ENCODE measurements at regions of chr7 and their contacts with region 1.

Region 1: GRCh38 chr7:112449902-112450806 is at the start of gene IFRD1:
- DNase-seq: peak; percentile 98
- H3K4me3 ChIP-seq: peak within 1 kb of the TSS; percentile 99 to 100
- H3K27ac ChIP-seq: peak within 1 kb of the TSS; percentile 95 to 99
- H3K4me1 ChIP-seq: peaks cover 14 to 24% of the 10 kb centered on the region in 2 experiments; a peak in 3 of 4 replicates
- H3K27me3 ChIP-seq: no peaks in the 10 kb centered on the region
- CTCF ChIP-seq: no peak
- EP300 ChIP-seq: no peak
- RAD21 ChIP-seq: peak; percentile 2; the same call in 1 of the 2 replicates
- polyA plus RNA-seq, gene IFRD1: 31.0 and 39.7 TPM in 2 replicates

Region 2: GRCh38 chr7:112206238-112207044 is 243.7 kb before region 1 on chr7 and contains the starts of genes DOCK4 and ZNF277:
- CTCF ChIA-PET with region 1: no interaction called
- POLR2A ChIA-PET with region 1: interaction called, 13 read pairs
- DNase-seq: peak; percentile 98
- H3K4me3 ChIP-seq: peak within 1 kb of the TSS; percentile 82 to 99
- H3K27ac ChIP-seq: peak within 1 kb of the TSS; percentile 71 to 92
- H3K4me1 ChIP-seq: peaks cover 0 to 18% of the 10 kb centered on the region in 2 experiments; a peak in 2 of 4 replicates
- H3K27me3 ChIP-seq: no peaks in the 10 kb centered on the region
- CTCF ChIP-seq: no peak
- EP300 ChIP-seq: no peak; a peak in 1 of 4 replicates
- RAD21 ChIP-seq: peak; percentile 41
- polyA plus RNA-seq, gene DOCK4: 8.5 and 8.9 TPM in 2 replicates
- polyA plus RNA-seq, gene ZNF277: 11.5 and 12.9 TPM in 2 replicates

Region 3: GRCh38 chr7:112248598-112248997 is 201.6 kb before region 1 on chr7:
- CTCF ChIA-PET with region 1: no interaction called
- POLR2A ChIA-PET with region 1: no interaction called
- DNase-seq: no peak
- H3K4me3 ChIP-seq: no peak overlapping the region
- H3K27ac ChIP-seq: no peak overlapping the region
- H3K4me1 ChIP-seq: no peaks in the 10 kb centered on the region; a peak in 1 of 4 replicates
- H3K27me3 ChIP-seq: no peaks in the 10 kb centered on the region
- CTCF ChIP-seq: no peak
- EP300 ChIP-seq: no peak
- RAD21 ChIP-seq: no peak

Region 4: GRCh38 chr7:112437043-112437442 is 13.1 kb before region 1 on chr7:
- CTCF ChIA-PET with region 1: interaction called, 9 read pairs
- POLR2A ChIA-PET with region 1: interaction called, 36 read pairs
- DNase-seq: no peak
- H3K4me3 ChIP-seq: no peak overlapping the region
- H3K27ac ChIP-seq: peak overlapping the region in 1 of 2 experiments; percentile 98; a peak in 2 of 4 replicates
- H3K4me1 ChIP-seq: peaks cover 9 to 22% of the 10 kb centered on the region in 2 experiments
- H3K27me3 ChIP-seq: no peaks in the 10 kb centered on the region
- CTCF ChIP-seq: no peak
- EP300 ChIP-seq: peak in 1 of 2 experiments; percentile 21; a peak in 1 of 4 replicates
- RAD21 ChIP-seq: no peak

Region 5: DNA sequence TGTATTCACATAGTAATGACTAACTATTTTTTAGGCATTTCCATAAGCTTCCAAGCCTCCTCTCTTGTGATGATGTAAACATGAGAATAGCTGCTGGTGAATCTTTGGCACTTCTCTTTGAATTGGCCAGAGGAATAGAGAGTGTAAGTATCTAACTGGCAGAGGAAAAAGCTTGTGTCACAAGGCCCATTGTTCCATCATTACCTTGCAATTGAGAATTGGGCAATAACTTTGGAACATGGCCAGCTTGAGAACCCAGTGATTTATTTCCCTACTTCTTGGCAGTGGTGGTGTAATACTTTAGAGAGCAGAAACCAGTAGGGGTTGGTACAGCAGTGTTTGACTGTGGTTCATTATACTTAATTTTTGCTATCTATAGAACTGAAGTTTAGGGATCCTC is 12.1 kb after region 1 on chr7:
- CTCF ChIA-PET with region 1: interaction called, 8 read pairs
- POLR2A ChIA-PET with region 1: interaction called, 26 read pairs
- DNase-seq: no peak
- H3K4me3 ChIP-seq: no peak overlapping the region
- H3K27ac ChIP-seq: peak overlapping the region in 1 of 2 experiments; percentile 34
- H3K4me1 ChIP-seq: peaks cover 0 to 2% of the 10 kb centered on the region in 2 experiments; a peak in 2 of 4 replicates
- H3K27me3 ChIP-seq: no peaks in the 10 kb centered on the region
- CTCF ChIP-seq: no peak
- EP300 ChIP-seq: no peak
- RAD21 ChIP-seq: no peak

Region 6: DNA sequence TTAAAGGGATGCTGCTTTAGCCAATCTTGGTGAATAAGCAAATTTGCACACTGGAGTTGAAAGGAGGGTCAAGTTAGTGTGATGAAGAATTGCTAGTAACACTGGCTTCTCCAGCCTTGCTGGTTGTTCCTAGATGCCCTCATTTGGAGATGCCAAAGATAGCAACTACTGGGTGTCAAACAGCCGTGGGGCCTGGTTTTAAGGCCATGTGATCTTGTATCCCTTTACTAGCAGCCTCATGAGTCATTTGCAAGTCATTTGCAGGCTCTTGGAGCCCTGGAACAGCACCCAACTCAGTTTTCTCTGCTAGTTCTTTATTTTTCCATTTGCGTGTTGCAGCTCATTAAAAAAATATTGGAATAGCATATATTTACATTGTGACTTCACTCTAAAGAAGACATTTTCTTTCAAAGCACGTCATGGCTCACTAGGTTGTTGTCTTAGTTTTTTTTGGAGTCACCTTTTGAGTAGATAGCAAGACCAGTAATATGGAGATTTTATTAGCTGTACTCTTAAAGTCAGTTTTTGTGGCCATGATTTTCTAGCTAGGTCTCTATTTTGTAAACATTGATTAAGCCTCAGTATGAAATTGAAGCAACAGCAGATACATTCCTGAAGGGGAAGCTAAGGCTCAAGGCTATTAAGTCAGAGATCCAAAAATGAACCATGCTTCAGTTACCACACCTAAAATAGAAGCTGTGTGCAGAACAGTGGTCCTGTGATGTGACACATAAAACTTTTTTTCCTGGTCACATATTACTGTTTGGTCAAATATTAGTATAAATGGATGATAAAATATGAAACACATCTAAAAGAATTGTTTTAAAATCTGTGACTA is 31.9 kb after region 1 on chr7:
- CTCF ChIA-PET with region 1: interaction called, 11 read pairs
- POLR2A ChIA-PET with region 1: interaction called, 6 read pairs
- DNase-seq: no peak
- H3K4me3 ChIP-seq: no peak overlapping the region
- H3K27ac ChIP-seq: peak overlapping the region; percentile 61 to 90; a peak in 3 of 4 replicates
- H3K4me1 ChIP-seq: peaks cover 17 to 27% of the 10 kb centered on the region in 2 experiments
- H3K27me3 ChIP-seq: no peaks in the 10 kb centered on the region
- CTCF ChIP-seq: no peak
- EP300 ChIP-seq: peak in 1 of 2 experiments; percentile 45; a peak in 1 of 4 replicates
- RAD21 ChIP-seq: no peak

Region 7: GRCh38 chr7:112495810-112496462 is 45.8 kb after region 1 on chr7:
- CTCF ChIA-PET with region 1: interaction called, 17 read pairs
- POLR2A ChIA-PET with region 1: no interaction called
- DNase-seq: peak; percentile 57
- H3K4me3 ChIP-seq: no peak overlapping the region
- H3K27ac ChIP-seq: peak overlapping the region; percentile 35 to 70; a peak in 2 of 4 replicates
- H3K4me1 ChIP-seq: peaks cover 5 to 11% of the 10 kb centered on the region in 2 experiments; a peak in 3 of 4 replicates
- H3K27me3 ChIP-seq: no peaks in the 10 kb centered on the region
- CTCF ChIP-seq: peak; percentile 83
- EP300 ChIP-seq: no peak
- RAD21 ChIP-seq: peak; percentile 90

Region 8: GRCh38 chr7:112654322-112655216 is 204.4 kb after region 1 on chr7:
- CTCF ChIA-PET with region 1: no interaction called
- POLR2A ChIA-PET with region 1: no interaction called
- DNase-seq: no peak
- H3K4me3 ChIP-seq: no peak overlapping the region
- H3K27ac ChIP-seq: no peak overlapping the region
- H3K4me1 ChIP-seq: no peaks in the 10 kb centered on the region
- H3K27me3 ChIP-seq: no peaks in the 10 kb centered on the region
- CTCF ChIP-seq: no peak
- EP300 ChIP-seq: no peak
- RAD21 ChIP-seq: no peak

Measured in SK-N-SH (cell line).